ENCODE measurements at regions of chr18 and their contacts with region 1.

Region 1: DNA sequence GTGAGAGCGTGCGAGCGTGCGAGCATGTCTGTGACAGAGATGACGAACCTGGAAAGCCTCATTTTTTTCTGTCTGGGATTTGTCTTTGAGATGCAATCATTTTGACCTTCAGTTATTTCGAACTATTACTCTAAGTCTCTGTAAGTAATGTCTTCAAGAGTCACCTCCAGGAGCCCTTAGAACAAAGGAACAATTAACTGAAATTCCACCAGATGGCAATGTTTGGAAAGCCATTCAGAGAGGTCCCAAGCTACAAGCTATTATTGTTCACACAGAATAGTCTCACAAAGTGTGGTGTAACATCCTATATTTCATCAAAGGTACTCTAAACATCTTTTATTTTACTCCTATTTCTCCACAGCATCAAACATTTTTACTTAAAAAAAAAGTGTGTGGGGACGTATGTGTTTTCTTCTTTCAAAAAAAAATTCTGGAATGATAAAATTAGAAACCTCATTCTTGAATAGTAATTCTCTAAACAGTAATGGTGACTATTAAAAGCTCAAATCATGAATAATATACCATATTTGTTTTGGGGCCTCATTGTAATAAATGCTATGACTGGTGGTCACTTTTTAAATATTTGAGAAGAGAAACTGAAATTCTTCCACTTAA is 35.1 kb upstream of the MAPRE2 start:
- DNase-seq: no peak
- H3K4me3 ChIP-seq: no peak overlapping the region
- H3K27ac ChIP-seq: no peak overlapping the region
- H3K4me1 ChIP-seq: no peaks in the 10 kb centered on the region
- H3K27me3 ChIP-seq: peaks cover 0 to 9% (median 0%) of the 10 kb centered on the region in 4 donors
- CTCF ChIP-seq: peak; percentile 45 to 68 (median 60)
- POLR2A ChIP-seq: no peak

Region 2: DNA sequence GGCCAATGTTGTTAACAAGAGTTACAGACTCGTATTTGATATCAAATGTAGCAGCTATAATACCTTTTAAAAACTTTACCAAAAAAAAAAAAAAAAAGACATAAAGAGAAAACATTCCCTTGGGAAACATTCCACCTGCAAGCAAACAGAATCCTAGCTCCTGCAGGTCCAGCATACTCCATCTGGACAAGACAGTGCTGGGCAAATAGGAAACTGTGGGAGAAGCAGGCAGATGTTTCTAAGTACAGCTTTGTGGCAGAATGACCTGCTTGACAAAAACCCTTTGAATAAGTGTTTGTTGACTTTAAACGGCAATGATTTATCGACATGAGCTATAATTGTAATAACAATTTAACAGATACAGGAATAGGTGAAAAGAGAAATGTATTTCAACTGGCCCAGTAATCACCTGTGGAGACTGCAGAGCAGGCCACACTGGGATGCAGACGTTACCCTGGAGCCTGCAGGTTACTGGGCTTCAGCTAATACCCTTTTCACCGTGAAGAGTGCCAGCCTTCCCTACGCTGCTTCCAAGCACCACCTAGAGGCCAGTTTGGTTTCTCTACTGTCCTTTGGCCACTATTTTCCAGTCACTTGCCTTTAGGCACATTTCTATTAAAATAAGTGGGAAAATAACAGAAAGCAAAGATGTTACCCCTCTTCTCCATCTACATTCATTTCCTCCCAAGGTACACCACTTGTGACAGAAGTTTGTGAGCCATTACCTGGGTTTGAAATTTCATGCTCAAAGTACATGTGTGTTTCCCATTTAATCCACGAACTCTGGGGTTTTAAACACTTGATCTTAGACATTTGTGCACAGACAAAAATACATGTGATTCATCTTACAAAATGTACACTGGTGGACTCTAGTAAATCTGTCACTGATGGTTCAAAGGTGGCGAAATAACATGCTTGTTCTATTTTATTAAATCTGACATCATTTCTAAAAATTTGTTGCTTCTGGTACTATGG is 137.8 kb after region 1 on chr18:
- intact Hi-C with region 1: loop called (anchors 5 kb)
- DNase-seq: no peak
- H3K4me3 ChIP-seq: no peak overlapping the region
- H3K27ac ChIP-seq: no peak overlapping the region
- H3K4me1 ChIP-seq: peaks cover 0 to 5% (median 0%) of the 10 kb centered on the region in 3 donors
- H3K27me3 ChIP-seq: no peaks in the 10 kb centered on the region
- CTCF ChIP-seq: peak; percentile 20 to 70 (median 62)
- POLR2A ChIP-seq: no peak

Measured in esophagus squamous epithelium (tissue), 5 donors.